ENCODE measurements at regions of chrX and their contacts with region 1.

Region 1: DNA sequence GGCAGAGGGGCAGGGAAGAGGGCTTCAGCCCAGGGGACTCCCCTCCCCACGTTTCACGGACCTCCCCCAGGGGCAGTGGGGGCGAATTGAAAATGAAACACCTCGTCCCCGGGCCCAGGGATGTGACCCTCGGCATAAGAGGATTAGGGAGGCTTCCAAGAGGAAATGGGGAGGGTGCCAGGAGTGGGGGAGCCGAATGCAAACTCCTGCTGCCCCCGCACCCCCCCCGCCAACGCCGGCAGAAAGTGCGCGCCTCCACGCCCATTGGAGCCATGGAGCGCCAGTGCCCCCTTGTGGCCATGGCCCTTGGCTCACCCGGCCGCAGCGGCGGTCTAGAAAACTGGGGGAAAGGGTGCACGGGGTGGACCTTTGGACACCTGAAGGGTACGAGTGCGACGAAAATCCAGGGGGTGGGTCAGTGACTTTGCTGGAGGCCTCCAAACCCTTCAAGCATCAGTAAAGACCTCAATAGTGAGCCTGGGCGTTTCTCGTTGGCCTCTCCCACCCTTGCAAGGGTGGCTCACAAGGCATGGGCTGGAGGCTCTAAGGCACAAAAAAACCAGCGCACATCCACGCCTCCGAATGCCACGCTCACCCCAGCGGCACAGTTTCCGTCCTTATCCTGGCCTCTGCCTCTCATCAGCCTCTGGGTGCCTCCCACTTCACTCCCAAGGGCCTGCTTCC is 120.8 kb upstream of the PJA1 start:
- DNase-seq: peak; percentile 90

Region 2: GRCh38 chrX:68823413-68824151 is 462.4 kb before region 1 on chrX:
- intact Hi-C with region 1: loop called in 1 of 2 experiments (anchors 2 kb)
- DNase-seq: peak; percentile 60

Region 3: DNA sequence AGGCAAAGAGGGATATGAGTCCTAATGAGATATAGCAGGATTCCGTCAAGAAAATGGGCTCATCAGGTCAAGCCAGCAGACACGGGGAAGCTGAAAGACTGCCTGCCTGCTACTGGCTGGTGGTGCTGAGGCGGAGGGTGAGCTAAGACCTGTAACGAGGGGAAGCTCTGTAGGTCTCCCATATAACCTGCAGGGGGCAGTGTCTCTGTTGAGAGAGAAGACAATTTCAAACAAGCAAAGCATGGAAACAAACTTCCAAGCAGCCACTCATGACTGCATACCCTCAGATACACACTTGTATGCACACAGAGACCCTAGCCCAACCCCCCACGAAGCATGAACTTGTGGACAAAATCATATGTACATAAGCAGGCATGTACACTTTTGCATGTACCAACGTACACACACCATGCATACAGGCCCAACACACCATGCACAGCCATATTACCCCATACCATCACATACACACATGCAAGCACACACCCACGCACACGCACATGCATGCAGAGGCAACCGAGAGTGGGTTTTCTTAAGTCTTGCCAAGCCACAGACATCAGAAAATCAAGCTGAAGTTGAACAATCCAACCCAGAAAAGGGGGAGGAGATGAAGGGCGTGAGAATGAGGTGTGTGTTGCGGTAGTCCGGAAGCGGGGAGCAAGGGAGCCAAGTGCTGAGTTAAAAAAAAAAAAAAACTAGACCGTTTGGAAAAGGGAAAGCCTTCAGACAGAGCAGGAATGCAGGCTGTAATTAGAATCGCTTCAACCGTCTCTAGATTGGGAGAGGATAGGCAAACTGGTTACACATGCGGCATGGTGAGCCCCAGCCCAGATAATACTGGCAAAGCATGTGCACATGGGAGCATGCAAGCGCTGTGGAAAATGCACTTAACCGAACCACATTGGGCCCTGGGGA is 191.8 kb before region 1 on chrX:
- intact Hi-C with region 1: loop called in 1 of 2 experiments (anchors 10 kb)
- DNase-seq: no peak

Region 4: DNA sequence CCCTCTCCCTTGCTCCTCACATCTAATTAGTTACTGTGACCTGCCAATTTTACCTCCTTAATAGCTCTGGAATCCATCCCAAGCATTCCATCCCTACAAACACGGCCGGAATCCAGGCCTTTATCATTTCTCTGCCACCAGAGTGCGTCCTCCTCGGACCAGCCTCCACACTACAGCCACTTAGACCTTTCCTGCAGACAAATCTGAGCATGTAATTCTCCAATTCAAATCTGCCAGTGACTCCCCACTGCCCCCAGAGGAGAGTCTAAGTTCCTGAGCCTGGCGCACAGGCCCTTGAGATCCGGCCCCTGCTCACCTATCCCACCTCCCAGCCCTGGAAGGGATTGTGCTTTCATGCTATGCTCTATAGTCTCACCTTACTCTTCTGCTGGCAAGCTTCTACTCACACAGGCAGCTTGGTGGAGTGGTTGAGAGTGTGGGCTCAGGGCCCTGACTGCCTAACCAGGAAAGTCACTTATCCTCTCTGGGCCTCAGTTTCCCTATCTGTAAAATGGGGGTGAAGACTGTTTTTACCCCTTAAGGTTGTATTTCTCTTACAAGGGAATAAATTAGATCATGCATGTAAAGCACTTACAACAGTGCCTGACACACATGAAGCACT is 152.0 kb before region 1 on chrX:
- intact Hi-C with region 1: loop called (anchors 5 to 10 kb)
- DNase-seq: no peak

Region 5: GRCh38 chrX:69238114-69238886 is 47.7 kb before region 1 on chrX:
- intact Hi-C with region 1: loop called in 1 of 2 experiments (anchors 10 kb)
- DNase-seq: no peak

Region 6: GRCh38 chrX:69305333-69306062 is 19.5 kb after region 1 on chrX:
- intact Hi-C with region 1: no loop called
- DNase-seq: no peak

Region 7: GRCh38 chrX:69412661-69413060 is 126.6 kb after region 1 on chrX:
- intact Hi-C with region 1: no loop called
- DNase-seq: no peak

Measured in posterior vena cava (tissue), 2 donors.